OCI-LY7 (cell line): ENCODE measurements at regions of chr11 and their contacts with region 1.

Region 1: DNA sequence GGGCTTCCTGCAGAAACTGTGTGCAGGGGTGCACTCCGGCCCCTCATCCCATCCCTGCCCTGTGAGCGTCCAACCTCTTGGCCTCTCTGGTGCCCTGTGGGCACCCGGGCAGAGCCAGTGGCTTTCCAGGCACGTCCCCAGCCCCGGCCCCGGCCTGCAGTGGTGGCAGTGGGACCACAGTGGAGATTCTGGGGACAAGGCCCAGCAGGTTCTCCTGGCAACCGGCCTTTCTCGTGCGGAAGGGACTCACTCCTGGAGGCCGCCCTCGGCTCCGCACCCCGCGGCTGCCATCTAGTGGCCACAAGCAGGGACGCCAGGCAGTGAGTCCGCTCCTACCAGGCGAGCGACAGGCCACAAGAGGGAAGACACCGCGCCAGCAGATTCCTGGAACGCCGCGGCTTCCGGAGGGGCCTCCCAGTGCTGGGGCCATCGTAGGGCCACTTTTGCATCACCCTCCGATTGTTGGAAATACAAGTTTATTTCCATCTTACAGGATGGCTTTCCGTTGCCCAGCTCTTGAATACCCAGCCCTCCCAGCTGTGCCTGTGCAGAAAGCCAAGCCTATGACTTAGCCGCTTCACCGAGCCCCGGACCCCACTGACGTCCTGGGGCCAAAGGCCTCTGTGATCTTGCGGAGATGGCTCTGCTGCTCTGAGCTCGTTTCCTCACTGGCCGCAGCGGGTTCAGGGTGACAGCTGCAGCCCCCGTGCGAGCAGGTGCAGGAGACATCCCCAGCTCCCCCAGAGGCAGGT is 357.3 kb downstream of the CTTN start:
- DNase-seq: peak; percentile 39
- H3K4me3 ChIP-seq: no peak overlapping the region
- H3K27ac ChIP-seq: no peak overlapping the region
- H3K4me1 ChIP-seq: no peaks in the 10 kb centered on the region
- CTCF ChIP-seq: peak; percentile 79

Region 2: GRCh38 chr11:70467201-70468085 is 288.1 kb before region 1 on chr11:
- CTCF ChIA-PET with region 1: no interaction called
- POLR2A ChIA-PET with region 1: no interaction called
- intact Hi-C with region 1: loop called (anchors 1 kb)
- DNase-seq: peak; percentile 50
- H3K4me3 ChIP-seq: no peak overlapping the region
- H3K27ac ChIP-seq: no peak overlapping the region
- H3K4me1 ChIP-seq: peaks cover 23% of the 10 kb centered on the region
- CTCF ChIP-seq: peak; percentile 97

Region 3: DNA sequence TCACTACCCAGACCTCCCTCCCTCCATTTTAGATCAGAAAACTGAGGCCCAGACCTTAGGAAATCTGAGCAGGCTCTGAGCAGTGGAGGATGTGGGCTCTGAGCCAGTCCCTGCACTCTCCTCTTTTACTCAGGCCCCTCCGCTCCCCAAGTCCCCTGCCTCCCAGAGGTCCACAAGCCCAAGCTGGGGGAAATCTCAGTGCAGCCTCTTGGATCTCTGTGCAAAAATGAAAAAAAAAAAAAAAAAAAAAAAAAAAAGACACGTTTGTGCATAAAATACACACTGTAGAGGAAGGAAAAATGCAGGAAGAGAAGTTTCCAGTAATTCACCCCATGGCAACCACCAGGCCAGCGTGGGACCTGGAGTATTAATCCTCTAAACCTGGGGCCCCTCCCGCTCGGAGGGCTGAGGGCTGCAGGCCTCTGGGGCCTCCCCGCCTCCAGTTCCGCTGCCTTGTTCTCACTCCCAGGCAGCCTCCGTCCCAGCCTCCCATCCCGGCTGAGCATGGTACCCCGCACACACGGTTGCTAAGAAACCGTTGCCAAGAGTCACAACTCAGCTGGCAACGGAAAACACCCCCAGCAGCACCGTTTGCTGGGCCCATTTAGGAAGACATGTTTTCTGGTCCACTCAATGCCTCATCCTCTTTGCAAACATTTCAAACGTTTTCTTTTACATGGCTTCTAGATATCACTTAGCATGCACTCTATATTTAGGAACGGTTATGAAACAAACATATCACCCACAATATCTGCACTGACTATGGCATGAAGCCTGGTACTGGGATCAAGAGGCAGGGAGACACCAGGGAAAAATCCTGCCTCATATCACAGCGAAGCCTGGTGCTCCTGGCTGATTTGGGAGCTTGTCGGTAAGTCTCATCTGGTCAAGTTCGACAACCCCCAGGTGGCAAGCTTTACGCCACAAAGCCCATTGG is 129.7 kb before region 1 on chr11:
- CTCF ChIA-PET with region 1: no interaction called
- POLR2A ChIA-PET with region 1: no interaction called
- intact Hi-C with region 1: no loop called
- DNase-seq: no peak
- H3K4me3 ChIP-seq: no peak overlapping the region
- H3K27ac ChIP-seq: no peak overlapping the region
- H3K4me1 ChIP-seq: no peaks in the 10 kb centered on the region
- CTCF ChIP-seq: no peak